ENCODE measurements at regions of chr11 and their contacts with region 1.

Region 1: GRCh38 chr11:130434521-130435223 is 6.3 kb upstream of the ADAMTS8 start:
- DNase-seq: peak; percentile 58
- H3K4me3 Mint-ChIP-seq: no peak overlapping the region
- H3K27ac Mint-ChIP-seq: no peak overlapping the region
- H3K4me1 Mint-ChIP-seq: peaks cover 19% of the 10 kb centered on the region
- H3K27me3 Mint-ChIP-seq: peaks cover 24% of the 10 kb centered on the region

Region 2: DNA sequence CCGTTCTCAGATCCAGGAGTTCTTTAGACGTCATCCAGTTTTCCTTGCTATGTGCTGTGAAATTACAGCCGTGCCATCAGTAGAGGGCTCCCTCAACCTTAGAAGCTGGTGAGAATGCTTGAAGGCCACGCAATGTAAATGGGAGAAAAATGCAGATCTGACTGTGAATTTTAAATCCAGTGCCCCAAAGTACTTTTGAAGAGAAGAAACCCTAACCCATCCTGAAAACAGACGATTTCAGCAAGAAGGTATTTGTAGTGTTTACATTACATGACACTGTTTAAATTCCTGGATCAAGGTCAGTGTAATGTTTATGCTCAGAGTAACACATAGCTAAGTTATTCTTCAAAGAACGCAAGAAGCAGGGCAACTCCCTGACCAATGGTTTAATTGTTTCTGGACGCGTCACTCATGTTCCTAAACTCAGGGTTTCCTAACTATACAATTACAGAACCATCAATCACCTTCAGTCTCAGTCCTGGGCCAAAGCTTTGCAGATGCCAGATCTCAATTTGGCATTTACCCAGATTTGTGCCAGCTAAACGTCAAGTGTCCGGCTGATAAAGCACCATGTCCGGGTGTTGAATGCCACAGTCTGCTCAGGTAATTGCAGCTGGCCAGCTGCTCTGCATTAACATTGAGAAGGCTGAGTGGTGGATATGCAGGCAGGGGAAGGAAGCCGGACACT is 44.5 kb before region 1 on chr11:
- intact Hi-C with region 1: loop called (anchors 1 kb)
- DNase-seq: no peak
- H3K4me3 Mint-ChIP-seq: no peak overlapping the region
- H3K27ac Mint-ChIP-seq: no peak overlapping the region
- H3K4me1 Mint-ChIP-seq: peaks cover 13% of the 10 kb centered on the region
- H3K27me3 Mint-ChIP-seq: peaks cover 8% of the 10 kb centered on the region

Region 3: GRCh38 chr11:130666781-130667251 is 232.1 kb after region 1 on chr11:
- intact Hi-C with region 1: loop called (anchors 10 kb)
- DNase-seq: no peak
- H3K4me3 Mint-ChIP-seq: no peak overlapping the region
- H3K27ac Mint-ChIP-seq: no peak overlapping the region
- H3K4me1 Mint-ChIP-seq: no peaks in the 10 kb centered on the region
- H3K27me3 Mint-ChIP-seq: peaks cover 5% of the 10 kb centered on the region

Region 4: DNA sequence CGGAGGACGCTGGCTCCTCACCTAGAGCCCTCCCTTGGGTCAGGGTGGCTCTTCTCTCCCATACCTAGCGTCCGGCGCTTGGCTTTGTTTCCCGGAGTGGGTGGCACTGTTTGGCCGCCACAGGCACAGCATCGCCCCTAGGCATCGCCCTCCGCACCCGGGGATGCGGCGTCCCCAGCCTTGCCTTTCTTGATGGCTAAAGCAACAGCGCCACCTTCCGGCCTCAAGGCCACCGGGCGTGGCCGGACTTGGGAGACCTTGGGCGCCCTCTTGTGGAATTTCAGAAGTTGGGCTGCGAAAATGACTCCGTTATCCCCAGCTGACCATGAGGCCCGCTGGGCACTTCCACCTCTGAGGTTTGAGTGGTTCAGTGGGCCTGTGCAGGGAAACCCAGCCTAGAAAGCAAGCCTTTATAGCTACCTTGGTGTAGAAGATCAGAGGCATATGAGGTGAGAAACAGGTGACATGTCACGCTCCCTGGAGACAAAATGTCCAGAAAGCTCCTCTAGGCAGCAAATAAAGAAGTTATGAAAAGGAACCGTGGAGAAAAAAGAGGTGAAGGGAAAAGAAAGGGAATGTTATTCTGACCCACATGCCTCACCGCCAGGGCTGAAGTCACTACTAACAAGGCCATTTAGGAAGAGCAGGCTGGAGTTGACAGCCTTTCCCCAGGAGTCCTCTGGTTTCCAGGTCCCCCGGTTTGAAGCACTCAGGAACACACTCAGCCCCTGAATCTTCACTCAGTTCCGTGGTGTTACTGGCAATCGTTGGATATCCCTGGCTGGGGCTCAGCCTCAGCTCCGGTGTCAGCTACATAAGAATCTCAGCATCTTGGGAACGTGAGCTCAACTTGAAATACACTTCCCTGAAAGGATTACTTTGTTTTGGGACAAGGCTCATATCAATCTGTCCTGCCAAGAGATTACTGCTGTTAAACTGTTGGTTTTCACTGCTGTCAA is 427.5 kb after region 1 on chr11:
- intact Hi-C with region 1: loop called (anchors 1 kb)
- DNase-seq: peak; percentile 81
- H3K4me3 Mint-ChIP-seq: no peak overlapping the region
- H3K27ac Mint-ChIP-seq: no peak overlapping the region
- H3K4me1 Mint-ChIP-seq: peaks cover 7% of the 10 kb centered on the region
- H3K27me3 Mint-ChIP-seq: no peaks in the 10 kb centered on the region

Region 5: GRCh38 chr11:130916238-130916855 is 481.7 kb after region 1 on chr11 and contains the start of gene SNX19:
- intact Hi-C with region 1: loop called (anchors 1 kb)
- DNase-seq: peak; percentile 90
- H3K4me3 Mint-ChIP-seq: peak within 1 kb of the TSS; percentile 87
- H3K27ac Mint-ChIP-seq: peak within 1 kb of the TSS; percentile 63
- H3K4me1 Mint-ChIP-seq: peaks cover 33% of the 10 kb centered on the region
- H3K27me3 Mint-ChIP-seq: peaks cover 8% of the 10 kb centered on the region
- total RNA-seq, gene SNX19: 58.5 and 60.7 TPM in 2 replicates

Measured in activated T-helper 1 cell treated with anti-CD3 and anti-CD28 coated beads, Interleukin-12 subunit alpha, Interleukin-12 subunit beta, Interleukin-2, Interleukin-4 antibody, amounts not matched to agents 30 ng/mL and 10 ng/mL and 1 ng/mL, durations not matched to agents 14 hours and 24 hours and 36 hours (primary cell).